Head of caudate nucleus (tissue), 42 donors: ENCODE measurements at regions of chr11 and their contacts with region 1.

Region 1: DNA sequence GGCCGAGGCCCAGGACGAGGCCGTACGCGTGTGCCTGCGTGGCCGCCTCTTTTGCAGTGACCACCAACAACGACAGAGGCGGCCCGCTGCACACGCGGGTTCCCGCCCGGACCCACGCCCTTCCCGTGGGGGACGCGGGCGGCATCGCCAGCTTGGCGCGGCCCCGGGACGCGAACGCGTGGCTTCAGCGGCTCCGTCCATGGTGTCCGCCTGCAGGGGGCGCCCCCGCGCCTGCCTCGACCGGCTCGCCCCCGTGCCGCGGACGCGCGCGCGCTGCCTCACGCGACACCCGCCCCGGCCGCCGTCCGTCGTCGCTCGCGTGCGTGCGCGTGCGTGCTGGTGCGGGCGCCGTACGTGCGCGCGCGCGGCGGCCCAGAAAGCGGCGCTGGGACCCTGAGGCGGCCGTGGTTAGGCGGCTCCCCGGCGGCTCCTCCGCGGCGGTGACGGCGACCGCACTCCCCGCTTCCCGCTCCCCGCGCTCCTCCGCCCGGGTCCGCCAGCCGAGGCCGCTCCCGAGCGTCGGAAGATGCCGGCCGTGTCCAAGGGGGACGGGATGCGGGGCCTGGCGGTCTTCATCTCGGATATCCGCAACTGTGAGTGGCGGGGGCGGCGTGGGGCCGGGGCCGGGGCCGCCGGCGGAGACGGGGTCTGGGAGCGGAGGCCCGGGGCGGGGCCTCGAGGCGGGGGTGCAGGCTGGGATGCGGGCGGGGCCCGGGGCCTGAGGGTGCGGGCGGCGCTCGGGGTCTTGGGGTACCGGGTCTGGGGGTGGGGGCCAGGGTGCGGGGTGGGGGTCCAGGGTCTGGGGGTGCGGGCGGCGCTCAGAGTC is at the start of gene AP2A2:
- DNase-seq: peak; percentile 32 to 94 (median 86)

Region 2: DNA sequence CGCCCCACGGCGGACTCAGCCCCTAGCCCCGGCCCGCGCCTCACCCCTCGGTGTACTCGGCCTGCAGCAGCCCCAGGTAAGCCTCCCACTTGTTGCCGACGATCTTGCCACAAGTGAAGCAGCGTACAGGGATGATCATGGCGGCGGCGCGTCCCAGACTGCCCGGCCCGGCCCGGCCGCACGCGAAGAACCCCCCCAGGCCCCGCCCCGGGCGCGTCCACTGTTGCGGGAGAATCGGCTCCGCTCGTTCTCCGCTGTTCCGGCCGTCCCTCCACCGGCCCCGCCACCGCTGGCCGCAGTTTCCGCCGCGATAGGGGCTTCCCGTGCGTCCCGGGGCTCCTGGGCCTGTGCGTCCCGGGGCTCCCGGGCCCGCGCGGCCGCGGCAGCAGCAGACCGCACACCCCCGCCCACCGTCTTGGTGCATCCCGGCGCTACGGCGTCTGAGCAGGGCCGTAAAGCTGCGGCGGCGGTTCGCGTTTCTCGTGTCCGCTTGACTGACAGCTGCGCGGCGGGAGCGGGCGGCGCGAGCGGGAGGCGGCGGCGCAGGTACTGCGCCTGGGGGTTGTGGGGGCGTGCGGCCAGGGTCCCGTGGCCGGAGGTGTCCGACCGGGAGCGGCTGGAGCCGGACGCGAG is 83.2 kb before region 1 on chr11 and contains the starts of genes POLR2L and TSPAN4:
- intact Hi-C with region 1: loop called (anchors 10 kb)
- DNase-seq: peak; percentile 73 to 96 (median 91)

Region 3: GRCh38 chr11:975827-976226 is 50.1 kb after region 1 on chr11:
- intact Hi-C with region 1: loop called (anchors 5 kb)
- DNase-seq: peak; percentile 27 to 86 (median 66)